ENCODE measurements at regions of chr7 and their contacts with region 1.

Region 1: GRCh38 chr7:42940985-42941847 is 9.0 kb downstream of the MRPL32 start:
- DNase-seq: peak; percentile 90
- ATAC-seq: peak; percentile 23
- H3K4me3 Mint-ChIP-seq: no peak overlapping the region
- H3K27ac Mint-ChIP-seq: no peak overlapping the region
- H3K4me1 Mint-ChIP-seq: peaks cover 42% of the 10 kb centered on the region
- H3K27me3 Mint-ChIP-seq: no peaks in the 10 kb centered on the region

Region 2: GRCh38 chr7:42502022-42502421 is 439.2 kb before region 1 on chr7:
- CTCF ChIA-PET with region 1: no interaction called
- POLR2A ChIA-PET with region 1: no interaction called
- intact Hi-C with region 1: no loop called
- DNase-seq: no peak
- ATAC-seq: no peak
- H3K4me3 Mint-ChIP-seq: no peak overlapping the region
- H3K27ac Mint-ChIP-seq: no peak overlapping the region
- H3K4me1 Mint-ChIP-seq: no peaks in the 10 kb centered on the region
- H3K27me3 Mint-ChIP-seq: peaks cover 3% of the 10 kb centered on the region

Region 3: DNA sequence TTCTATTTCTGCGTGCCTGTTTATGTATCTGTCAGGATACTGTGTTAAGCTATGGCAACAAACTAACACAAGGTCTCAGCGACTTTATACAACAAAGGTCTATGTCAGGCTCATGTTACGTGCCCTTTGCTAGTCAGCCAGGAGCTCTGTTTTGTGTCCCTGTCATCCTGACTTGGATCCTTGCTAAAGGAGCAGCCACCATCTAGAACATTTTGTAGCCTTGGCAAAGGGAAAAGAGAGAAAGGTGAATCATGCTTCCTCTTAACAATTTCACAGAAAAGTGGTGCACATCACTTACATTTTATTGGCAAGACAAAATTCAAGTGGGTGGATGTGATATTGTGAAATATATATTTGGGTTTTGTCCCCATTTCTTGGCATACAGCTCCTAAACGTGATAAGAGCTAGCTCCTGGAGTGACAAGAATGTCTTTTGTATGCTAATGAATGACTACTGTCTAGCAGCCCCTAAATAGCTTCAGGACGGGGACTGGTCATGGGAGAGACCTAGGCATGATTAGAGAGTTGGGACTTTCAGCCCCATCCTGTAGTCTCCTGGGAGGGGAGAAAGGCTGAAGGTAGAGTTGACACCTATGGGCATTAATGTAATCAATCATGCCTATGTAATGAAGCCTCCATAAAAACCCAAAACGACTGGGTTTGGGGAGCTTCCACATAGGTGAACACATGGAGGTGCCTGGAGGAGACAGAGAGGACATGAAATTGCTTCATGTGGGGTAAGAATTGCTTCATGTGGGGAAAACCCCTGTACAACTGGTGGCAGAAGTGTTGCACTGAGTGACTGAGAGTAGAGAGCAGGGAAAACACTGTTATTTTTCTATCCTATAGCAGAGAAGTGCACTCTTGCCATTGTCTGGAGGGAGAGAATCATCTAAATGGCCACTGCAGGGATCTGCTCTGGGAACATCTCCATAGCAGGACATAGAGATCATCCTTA is 23.9 kb after region 1 on chr7:
- CTCF ChIA-PET with region 1: no interaction called
- POLR2A ChIA-PET with region 1: no interaction called
- intact Hi-C with region 1: loop called in 1 of 2 experiments (anchors 1 kb)
- DNase-seq: peak; percentile 22
- ATAC-seq: peak; percentile 88
- H3K4me3 Mint-ChIP-seq: no peak overlapping the region
- H3K27ac Mint-ChIP-seq: peak overlapping the region; percentile 24
- H3K4me1 Mint-ChIP-seq: peaks cover 12% of the 10 kb centered on the region
- H3K27me3 Mint-ChIP-seq: peaks cover 9% of the 10 kb centered on the region

Region 4: GRCh38 chr7:43108255-43109011 is 167.2 kb after region 1 on chr7:
- CTCF ChIA-PET with region 1: interaction called, 3 read pairs
- POLR2A ChIA-PET with region 1: no interaction called
- intact Hi-C with region 1: loop called (anchors 1 to 2 kb)
- DNase-seq: peak; percentile 81
- ATAC-seq: peak; percentile 87
- H3K4me3 Mint-ChIP-seq: no peak overlapping the region
- H3K27ac Mint-ChIP-seq: no peak overlapping the region
- H3K4me1 Mint-ChIP-seq: peaks cover 3% of the 10 kb centered on the region
- H3K27me3 Mint-ChIP-seq: peaks cover 45% of the 10 kb centered on the region

Region 5: DNA sequence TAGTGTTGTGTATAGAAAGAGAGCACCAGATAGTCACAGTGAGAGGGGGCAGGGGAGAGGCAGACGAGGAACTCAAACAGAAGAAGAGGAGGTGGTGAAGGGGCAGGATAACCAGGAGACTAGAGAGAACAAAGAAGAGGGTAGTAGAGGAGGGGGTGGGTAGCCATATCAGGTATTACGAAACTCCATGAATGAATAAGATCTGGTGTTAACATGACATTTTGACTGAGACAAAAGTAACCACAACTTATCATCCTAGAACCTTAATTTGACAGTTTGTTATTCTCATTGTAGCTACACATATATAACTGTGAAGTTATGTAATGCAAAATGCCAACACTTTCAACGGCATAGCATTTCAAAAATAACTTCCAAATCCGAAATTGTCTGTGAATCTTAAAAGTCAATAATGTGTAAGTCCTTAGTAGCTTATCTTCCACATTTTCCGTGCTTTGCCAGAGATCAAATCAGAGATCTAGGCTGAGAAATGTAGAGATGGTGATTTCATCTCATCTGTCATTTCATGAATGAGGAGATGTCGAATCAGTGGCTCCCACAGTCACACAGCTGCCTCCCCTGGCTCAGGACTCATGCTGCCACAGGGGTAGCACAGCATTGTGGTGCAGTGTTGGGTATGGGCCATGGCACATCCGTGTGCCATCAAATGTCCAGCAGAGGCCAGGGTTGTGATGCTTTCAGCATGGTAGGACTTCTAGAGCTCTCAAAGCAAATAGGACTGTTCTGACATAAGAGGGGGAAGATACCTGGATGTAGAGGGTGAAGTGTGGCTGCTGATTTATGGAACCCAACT is 373.4 kb after region 1 on chr7:
- CTCF ChIA-PET with region 1: no interaction called
- POLR2A ChIA-PET with region 1: no interaction called
- intact Hi-C with region 1: loop called in 1 of 2 experiments (anchors 5 kb)
- DNase-seq: peak; percentile 65
- ATAC-seq: peak; percentile 88
- H3K4me3 Mint-ChIP-seq: peak overlapping the region; percentile 8
- H3K27ac Mint-ChIP-seq: no peak overlapping the region
- H3K4me1 Mint-ChIP-seq: peaks cover 17% of the 10 kb centered on the region
- H3K27me3 Mint-ChIP-seq: peaks cover 8% of the 10 kb centered on the region

Region 6: GRCh38 chr7:43439631-43440401 is 498.6 kb after region 1 on chr7:
- CTCF ChIA-PET with region 1: interaction called, 4 read pairs
- POLR2A ChIA-PET with region 1: no interaction called
- intact Hi-C with region 1: loop called (anchors 1 to 5 kb)
- DNase-seq: peak; percentile 83
- ATAC-seq: peak; percentile 73
- H3K4me3 Mint-ChIP-seq: no peak overlapping the region
- H3K27ac Mint-ChIP-seq: no peak overlapping the region
- H3K4me1 Mint-ChIP-seq: peaks cover 4% of the 10 kb centered on the region
- H3K27me3 Mint-ChIP-seq: peaks cover 2% of the 10 kb centered on the region